Heart left ventricle (tissue), 16 donors: ENCODE measurements at regions of chr6 and their contacts with region 1.

Region 1: DNA sequence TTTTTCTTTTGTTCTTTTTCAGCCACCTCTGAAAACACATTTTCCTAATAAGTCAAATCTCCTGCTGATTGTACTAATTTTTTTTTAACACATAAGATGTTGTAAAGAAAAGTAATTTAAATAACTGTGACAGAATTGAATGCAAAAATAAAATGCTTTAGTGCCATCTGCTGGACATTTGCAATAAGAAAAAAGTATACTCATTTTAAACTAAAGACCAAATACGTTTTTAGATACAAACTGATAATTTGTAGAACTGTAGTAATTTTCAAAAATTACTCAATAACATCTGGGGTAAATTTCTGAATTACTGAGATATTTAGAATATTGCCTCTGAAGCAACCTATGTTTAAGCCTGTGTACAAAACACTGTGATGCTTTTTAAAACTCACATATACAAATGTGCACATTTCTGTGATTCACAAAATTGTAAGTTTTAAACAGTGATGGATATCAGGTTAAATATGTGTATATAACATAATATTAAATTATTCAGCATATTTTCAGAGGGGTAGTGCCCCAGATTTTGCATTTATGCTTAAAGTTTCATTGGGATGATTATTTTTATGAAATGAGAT is 198.7 kb downstream of the RIMS1 start:
- DNase-seq: no peak
- ATAC-seq: no peak
- H3K4me3 ChIP-seq: no peak overlapping the region
- H3K27ac ChIP-seq: no peak overlapping the region
- H3K4me1 ChIP-seq: no peaks in the 10 kb centered on the region
- H3K27me3 ChIP-seq: peaks cover 0 to 9% (median 0%) of the 10 kb centered on the region in 9 donors
- CTCF ChIP-seq: peak; percentile 25 to 66 (median 50)
- POLR2A ChIP-seq: no peak

Region 2: DNA sequence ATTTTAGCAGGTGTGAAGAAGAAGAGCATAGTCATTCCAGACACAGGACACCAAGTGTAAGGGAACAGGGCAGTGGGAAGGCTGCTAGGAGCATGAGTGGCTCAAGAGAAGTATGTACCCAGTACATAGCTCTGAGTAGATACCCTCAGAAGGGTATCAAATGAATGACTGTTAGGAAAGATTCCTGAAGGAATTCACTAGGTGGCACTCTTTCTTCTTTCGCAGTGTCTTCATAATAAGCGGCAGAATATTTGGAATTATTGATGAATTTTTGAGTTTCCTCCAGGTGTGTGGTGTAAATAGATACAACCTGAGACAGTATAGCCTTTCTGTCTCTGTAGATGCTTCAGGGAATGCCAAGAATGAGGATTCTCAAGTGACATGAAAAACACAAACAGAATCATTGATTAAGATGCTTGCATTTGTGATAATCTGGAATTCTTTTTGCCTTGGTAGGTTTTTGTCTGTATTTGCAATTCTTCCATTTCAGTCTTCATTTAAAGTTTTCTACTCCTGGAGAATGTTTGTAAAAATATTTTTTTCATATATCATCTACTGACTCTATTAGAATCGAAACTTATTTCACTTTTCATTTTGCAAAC is 463.1 kb before region 1 on chr6:
- intact Hi-C with region 1: loop called in 7 of 10 experiments (anchors 5 to 10 kb)
- DNase-seq: no peak
- ATAC-seq: no peak
- H3K4me3 ChIP-seq: no peak overlapping the region
- H3K27ac ChIP-seq: no peak overlapping the region
- H3K4me1 ChIP-seq: no peaks in the 10 kb centered on the region
- H3K27me3 ChIP-seq: no peaks in the 10 kb centered on the region
- CTCF ChIP-seq: peak in 9 of 12 donors; percentile 12 to 52 (median 28)
- POLR2A ChIP-seq: no peak